Right ventricle myocardium superior (tissue), 1 donor: ENCODE measurements at regions of chr11 and their contacts with region 1.

Region 1: GRCh38 chr11:120511116-120511819 is at the start of gene GRIK4:
- DNase-seq: peak; percentile 88
- ATAC-seq: peak; percentile 97
- total RNA-seq, gene GRIK4: 0.11 TPM

Region 2: GRCh38 chr11:120682866-120683265 is 171.6 kb after region 1 on chr11:
- intact Hi-C with region 1: loop called (anchors 2 kb)
- DNase-seq: no peak
- ATAC-seq: no peak

Region 3: GRCh38 chr11:120801801-120802689 is 290.8 kb after region 1 on chr11:
- intact Hi-C with region 1: loop called (anchors 5 kb)
- DNase-seq: peak; percentile 62
- ATAC-seq: no peak

Region 4: DNA sequence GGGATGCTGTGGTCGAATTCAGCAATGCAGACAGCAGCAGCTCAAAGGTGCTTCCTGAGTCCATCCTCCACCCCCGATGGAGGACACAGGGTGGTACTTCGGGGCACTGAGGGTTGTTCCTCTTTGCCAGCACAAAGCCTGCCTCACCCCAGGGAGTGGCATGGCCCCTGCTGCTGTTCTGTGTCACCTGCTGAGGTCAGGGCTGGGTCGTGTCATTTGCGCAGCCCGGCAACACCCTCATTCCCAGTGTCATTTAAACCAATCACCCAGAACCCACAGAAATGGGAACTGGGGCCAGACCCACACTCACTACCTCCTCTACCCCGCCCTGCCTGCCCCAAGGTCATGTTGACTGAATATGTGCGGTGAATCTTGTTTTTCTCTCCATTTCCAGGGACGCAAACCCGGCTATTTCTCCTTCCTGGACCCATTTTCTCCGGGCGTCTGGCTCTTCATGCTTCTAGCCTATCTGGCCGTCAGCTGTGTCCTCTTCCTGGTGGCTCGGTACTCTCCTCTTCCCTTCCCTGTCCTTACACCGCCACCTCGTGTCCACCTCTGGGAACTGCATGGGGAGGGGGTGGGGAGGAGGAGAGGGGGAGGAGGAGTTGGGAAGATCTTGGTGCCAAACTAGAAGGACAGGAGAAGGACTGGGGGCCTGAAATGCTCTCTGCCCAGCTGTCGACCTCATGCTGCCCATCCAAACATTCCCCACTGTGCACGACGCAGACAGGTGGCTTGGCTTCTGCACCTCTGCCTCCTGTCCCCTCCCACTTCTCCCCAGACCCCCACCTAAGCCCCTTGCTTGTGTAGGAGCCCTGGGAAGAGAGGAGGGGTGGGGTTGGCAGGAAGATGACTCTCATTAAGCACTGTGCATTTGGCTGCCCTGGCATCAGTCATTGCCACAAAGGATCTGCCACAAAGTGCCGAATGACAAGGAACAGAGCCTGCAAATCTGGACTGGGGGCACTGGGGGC is 441.5 kb after region 1 on chr11:
- intact Hi-C with region 1: loop called (anchors 5 kb)
- DNase-seq: peak; percentile 77
- ATAC-seq: peak; percentile 95

Region 5: GRCh38 chr11:121112498-121113455 is 601.5 kb after region 1 on chr11:
- intact Hi-C with region 1: loop called (anchors 5 kb)
- DNase-seq: peak; percentile 72
- ATAC-seq: peak; percentile 91

Region 6: DNA sequence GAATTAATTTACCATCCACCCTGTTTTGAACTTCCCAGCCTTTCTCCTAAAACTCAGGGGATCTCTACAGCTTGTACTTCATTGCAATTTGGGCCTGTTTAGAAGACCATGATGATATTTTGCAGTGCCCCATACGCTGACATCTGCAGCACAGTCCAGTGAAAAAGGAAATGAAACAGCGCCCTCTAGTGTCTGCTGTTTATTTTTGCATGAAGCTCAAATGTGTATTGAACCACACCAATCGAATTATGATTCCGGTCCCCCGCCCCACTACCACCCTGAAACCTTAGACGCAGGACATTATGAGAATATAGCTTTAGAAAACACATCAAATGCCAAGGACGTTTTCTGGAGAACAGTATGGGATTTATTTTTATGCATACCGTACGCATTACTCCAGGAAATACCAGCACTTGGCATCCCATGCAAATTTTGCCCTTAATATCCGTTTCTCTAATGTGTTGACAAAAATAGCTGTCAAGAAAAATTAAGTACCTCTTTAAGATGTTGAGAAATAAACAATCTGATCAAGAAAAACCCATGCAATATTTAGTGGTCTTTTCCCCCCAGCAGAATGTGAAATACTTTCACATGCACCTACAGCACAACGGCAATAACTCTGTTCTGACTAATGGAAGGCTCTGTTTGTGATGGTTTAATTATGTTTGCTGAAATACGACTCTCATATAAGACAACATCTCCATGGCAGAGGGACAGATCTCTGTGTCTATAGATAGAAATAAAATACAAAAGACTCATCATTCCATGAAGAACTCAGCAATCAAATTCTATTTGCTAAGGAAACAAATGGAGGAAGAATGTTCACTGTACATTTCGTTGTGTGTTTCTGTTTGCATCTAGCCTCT is 683.7 kb after region 1 on chr11:
- intact Hi-C with region 1: loop called (anchors 10 kb)
- DNase-seq: no peak
- ATAC-seq: peak; percentile 88